ENCODE measurements at regions of chr7 and their contacts with region 1.

Region 1: GRCh38 chr7:143008007-143008901 is 18.7 kb downstream of the OR9A2 start:
- DNase-seq: peak; percentile 29 to 55
- ATAC-seq: peak; percentile 76 to 83
- H3K4me3 ChIP-seq: no peak overlapping the region
- H3K27ac ChIP-seq: no peak overlapping the region
- H3K4me1 ChIP-seq: peaks cover 0 to 1% of the 10 kb centered on the region in 2 donors
- H3K27me3 ChIP-seq: no peaks in the 10 kb centered on the region
- CTCF ChIP-seq: peak; percentile 82 to 96 (median 90)
- POLR2A ChIP-seq: no peak

Region 2: DNA sequence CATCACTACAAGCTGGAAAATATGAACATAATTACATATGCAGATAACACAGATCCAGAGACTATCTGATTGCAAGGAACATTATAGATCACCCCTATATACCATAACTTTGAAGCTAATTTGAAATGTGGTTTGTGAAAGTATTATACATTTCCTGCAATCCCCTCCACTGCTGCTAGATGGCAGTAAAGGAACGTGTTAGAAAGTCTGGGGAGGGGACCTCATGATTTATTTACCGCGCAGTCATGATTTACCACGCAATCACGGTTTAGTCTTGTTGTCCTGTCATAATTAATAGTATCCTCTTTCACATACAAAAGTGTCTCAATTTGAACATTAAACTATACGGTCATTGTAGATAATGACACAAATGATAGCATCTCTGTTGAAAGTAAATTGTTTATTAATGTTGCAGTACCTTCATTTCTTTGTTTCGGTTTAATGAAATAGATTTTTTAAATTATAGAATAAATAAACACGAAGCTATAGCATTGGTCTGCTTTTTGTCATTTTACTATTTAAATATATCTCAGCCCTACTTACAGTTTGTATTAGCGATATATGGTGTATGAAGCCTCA is 404.3 kb before region 1 on chr7:
- in situ Hi-C with region 1: no loop called
- intact Hi-C with region 1: loop called (anchors 10 kb)
- DNase-seq: peak; percentile 32 to 38
- ATAC-seq: peak; percentile 38 to 75
- H3K4me3 ChIP-seq: peak overlapping the region in 3 of 4 donors; percentile 12 to 36 (median 14)
- H3K27ac ChIP-seq: peak overlapping the region in 2 of 4 donors; percentile 2 to 20
- H3K4me1 ChIP-seq: peaks cover 6 to 11% of the 10 kb centered on the region in 2 donors
- H3K27me3 ChIP-seq: no peaks in the 10 kb centered on the region
- CTCF ChIP-seq: peak; percentile 71 to 89 (median 86)
- POLR2A ChIP-seq: no peak

Region 3: GRCh38 chr7:142853739-142854371 is 154.4 kb before region 1 on chr7:
- in situ Hi-C with region 1: loop called in 1 of 4 experiments (anchors 10 kb)
- intact Hi-C with region 1: loop called (anchors 5 kb)
- DNase-seq: no peak
- ATAC-seq: peak; percentile 62 to 75
- H3K4me3 ChIP-seq: peak overlapping the region; percentile 72 to 81 (median 76)
- H3K27ac ChIP-seq: peak overlapping the region; percentile 19 to 62 (median 56)
- H3K4me1 ChIP-seq: peaks cover 2 to 12% of the 10 kb centered on the region in 2 donors
- H3K27me3 ChIP-seq: no peaks in the 10 kb centered on the region
- CTCF ChIP-seq: peak; percentile 41 to 70 (median 64)
- POLR2A ChIP-seq: no peak

Region 4: GRCh38 chr7:142873281-142873787 is 134.9 kb before region 1 on chr7:
- in situ Hi-C with region 1: loop called in 1 of 4 experiments (anchors 10 kb)
- intact Hi-C with region 1: no loop called
- DNase-seq: no peak
- ATAC-seq: no peak
- H3K4me3 ChIP-seq: no peak overlapping the region
- H3K27ac ChIP-seq: no peak overlapping the region
- H3K4me1 ChIP-seq: no peaks in the 10 kb centered on the region
- H3K27me3 ChIP-seq: no peaks in the 10 kb centered on the region
- CTCF ChIP-seq: peak in 1 of 5 experiments; percentile 14
- POLR2A ChIP-seq: no peak

Region 5: DNA sequence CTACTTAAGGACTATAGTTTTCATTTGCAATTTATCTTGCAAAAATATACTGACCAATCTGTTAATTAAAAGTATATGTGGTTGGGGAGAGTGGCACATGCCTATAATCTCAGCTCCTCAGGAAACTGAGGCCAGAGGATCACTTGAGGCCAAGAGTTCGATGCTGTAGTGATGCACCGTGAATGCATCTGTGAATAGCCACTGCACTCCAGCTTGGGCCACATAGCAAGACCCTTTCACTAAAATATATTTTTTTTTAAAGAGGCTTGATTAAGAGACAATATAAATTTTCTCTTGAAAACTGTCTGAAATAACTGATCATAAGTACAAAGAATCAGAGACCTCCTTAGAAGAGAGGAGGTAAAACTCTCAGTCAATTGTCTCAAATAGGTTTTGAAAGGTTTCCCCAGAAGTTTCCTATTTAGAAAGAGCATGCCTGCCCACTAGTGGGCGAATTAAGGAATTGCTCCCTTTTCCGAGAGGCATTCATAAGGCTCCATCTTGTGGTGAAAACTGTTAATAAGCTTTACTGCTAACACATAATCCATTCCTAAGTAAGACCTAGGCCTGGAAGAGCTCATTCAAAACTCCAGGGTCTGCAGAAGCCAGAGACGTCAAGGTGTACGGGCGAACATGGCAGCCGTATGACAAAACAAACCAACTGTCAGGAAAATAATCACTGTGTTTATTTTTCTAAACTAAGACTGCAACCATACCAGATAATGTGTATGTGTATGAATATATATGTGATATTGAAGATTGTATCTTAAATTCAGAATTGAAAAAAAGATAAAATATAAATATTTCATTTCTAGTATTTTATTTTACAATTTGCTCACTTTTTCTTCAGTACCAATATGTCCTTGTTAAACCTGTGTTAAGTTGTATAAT is 206.8 kb after region 1 on chr7:
- in situ Hi-C with region 1: loop called (anchors 5 kb)
- intact Hi-C with region 1: loop called (anchors 1 kb)
- DNase-seq: peak; percentile 19 to 32
- ATAC-seq: peak; percentile 83 to 91
- H3K4me3 ChIP-seq: no peak overlapping the region
- H3K27ac ChIP-seq: no peak overlapping the region
- H3K4me1 ChIP-seq: no peaks in the 10 kb centered on the region
- H3K27me3 ChIP-seq: no peaks in the 10 kb centered on the region
- CTCF ChIP-seq: peak; percentile 81 to 99 (median 98)
- POLR2A ChIP-seq: no peak

Region 6: GRCh38 chr7:143416565-143417149 is 408.4 kb after region 1 on chr7:
- in situ Hi-C with region 1: loop called in 1 of 4 experiments (anchors 25 kb)
- intact Hi-C with region 1: no loop called
- DNase-seq: no peak
- ATAC-seq: peak; percentile 54 to 70
- H3K4me3 ChIP-seq: no peak overlapping the region
- H3K27ac ChIP-seq: no peak overlapping the region
- H3K4me1 ChIP-seq: no peaks in the 10 kb centered on the region
- H3K27me3 ChIP-seq: no peaks in the 10 kb centered on the region
- CTCF ChIP-seq: peak; percentile 67 to 84 (median 80)
- POLR2A ChIP-seq: no peak

Region 7: DNA sequence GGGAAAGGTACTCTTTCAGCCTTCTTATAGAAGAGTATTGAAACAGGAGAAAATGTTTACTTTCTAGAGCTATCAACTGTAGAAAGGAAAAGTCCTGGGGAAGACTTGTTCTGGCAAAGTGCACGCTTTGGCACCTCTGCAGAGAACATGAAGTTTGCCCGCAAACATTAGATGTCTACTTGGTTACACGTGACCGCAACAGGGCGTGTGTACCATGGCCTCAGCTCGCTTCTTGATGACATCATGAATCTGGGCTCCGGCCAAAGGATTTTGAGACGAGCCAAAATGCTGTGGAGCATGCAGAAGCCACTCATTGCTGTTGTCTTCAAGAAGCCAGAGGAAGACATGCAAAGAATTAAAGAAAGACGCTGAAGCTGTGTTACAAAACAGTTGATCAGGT is 426.4 kb after region 1 on chr7:
- in situ Hi-C with region 1: loop called in 1 of 4 experiments (anchors 25 kb)
- intact Hi-C with region 1: no loop called
- DNase-seq: peak; percentile 8 to 30
- ATAC-seq: peak in 1 of 2 donors; percentile 44
- H3K4me3 ChIP-seq: no peak overlapping the region
- H3K27ac ChIP-seq: no peak overlapping the region
- H3K4me1 ChIP-seq: no peaks in the 10 kb centered on the region
- H3K27me3 ChIP-seq: no peaks in the 10 kb centered on the region
- CTCF ChIP-seq: no peak
- POLR2A ChIP-seq: no peak